ENCODE measurements at regions of chr7 and their contacts with region 1.

Region 1: GRCh38 chr7:14691597-14692203 is 210.9 kb downstream of the DGKB start:
- DNase-seq: no peak
- ATAC-seq: no peak
- H3K4me3 ChIP-seq: no peak overlapping the region
- H3K27ac ChIP-seq: no peak overlapping the region
- H3K4me1 ChIP-seq: no peaks in the 10 kb centered on the region
- H3K27me3 ChIP-seq: no peaks in the 10 kb centered on the region
- CTCF ChIP-seq: peak; percentile 87; the same call in 1 of the 2 replicates

Region 2: DNA sequence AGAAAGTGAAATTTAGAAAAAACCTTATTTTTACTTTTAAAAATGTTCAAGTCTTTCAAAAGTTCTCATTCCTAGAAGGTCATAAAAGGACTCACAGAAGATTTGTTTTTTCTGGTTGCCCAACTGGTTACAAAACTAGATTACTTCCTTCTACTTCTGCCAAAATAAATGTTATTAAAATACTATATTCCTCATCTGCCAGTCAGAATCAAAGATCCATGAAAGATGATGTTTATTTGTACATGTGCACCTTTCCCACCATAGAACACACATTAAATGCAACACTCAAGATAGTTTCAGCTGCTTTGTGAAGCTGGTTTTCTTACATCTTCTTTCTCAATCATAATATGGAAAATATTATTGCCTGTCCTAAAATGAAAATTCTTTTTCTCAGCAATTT is 1167.6 kb before region 1 on chr7:
- CTCF ChIA-PET with region 1: no interaction called
- POLR2A ChIA-PET with region 1: no interaction called
- in situ Hi-C with region 1: no loop called
- intact Hi-C with region 1: loop called (anchors 10 kb)
- DNase-seq: no peak
- ATAC-seq: no peak
- H3K4me3 ChIP-seq: no peak overlapping the region
- H3K27ac ChIP-seq: no peak overlapping the region
- H3K4me1 ChIP-seq: no peaks in the 10 kb centered on the region
- H3K27me3 ChIP-seq: no peaks in the 10 kb centered on the region
- CTCF ChIP-seq: no peak

Region 3: DNA sequence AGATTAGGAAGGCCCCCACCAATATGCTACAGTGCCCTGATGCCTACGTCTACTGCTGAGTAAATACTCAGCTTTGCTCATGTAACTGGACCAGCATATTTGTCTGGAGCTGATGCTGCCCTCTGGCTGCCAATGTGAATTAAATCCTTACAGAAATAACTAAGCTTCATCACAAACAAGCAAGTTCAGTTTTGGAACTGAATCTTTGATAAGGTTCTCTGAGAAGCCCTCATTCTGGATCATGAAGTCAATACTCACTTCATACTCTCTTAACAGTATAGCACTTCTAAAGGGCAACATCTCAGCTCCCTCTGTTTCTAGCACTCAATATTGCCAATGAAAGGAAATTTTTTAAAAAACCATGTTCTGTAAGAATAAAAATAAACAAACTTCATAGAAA is 948.9 kb before region 1 on chr7:
- CTCF ChIA-PET with region 1: no interaction called
- POLR2A ChIA-PET with region 1: no interaction called
- in situ Hi-C with region 1: no loop called
- intact Hi-C with region 1: loop called (anchors 10 kb)
- DNase-seq: peak; percentile 36
- ATAC-seq: peak; percentile 80
- H3K4me3 ChIP-seq: no peak overlapping the region
- H3K27ac ChIP-seq: peak overlapping the region; percentile 52; the same call in 1 of the 2 replicates
- H3K4me1 ChIP-seq: no peaks in the 10 kb centered on the region
- H3K27me3 ChIP-seq: no peaks in the 10 kb centered on the region
- CTCF ChIP-seq: peak; percentile 81

Region 4: GRCh38 chr7:14457568-14458453 is 233.9 kb before region 1 on chr7:
- CTCF ChIA-PET with region 1: no interaction called
- POLR2A ChIA-PET with region 1: no interaction called
- in situ Hi-C with region 1: no loop called
- intact Hi-C with region 1: loop called (anchors 5 kb)
- DNase-seq: peak; percentile 79
- ATAC-seq: peak; percentile 78
- H3K4me3 ChIP-seq: no peak overlapping the region; a peak in 1 of 4 replicates
- H3K27ac ChIP-seq: no peak overlapping the region
- H3K4me1 ChIP-seq: no peaks in the 10 kb centered on the region
- H3K27me3 ChIP-seq: no peaks in the 10 kb centered on the region
- CTCF ChIP-seq: peak; percentile 93

Region 5: DNA sequence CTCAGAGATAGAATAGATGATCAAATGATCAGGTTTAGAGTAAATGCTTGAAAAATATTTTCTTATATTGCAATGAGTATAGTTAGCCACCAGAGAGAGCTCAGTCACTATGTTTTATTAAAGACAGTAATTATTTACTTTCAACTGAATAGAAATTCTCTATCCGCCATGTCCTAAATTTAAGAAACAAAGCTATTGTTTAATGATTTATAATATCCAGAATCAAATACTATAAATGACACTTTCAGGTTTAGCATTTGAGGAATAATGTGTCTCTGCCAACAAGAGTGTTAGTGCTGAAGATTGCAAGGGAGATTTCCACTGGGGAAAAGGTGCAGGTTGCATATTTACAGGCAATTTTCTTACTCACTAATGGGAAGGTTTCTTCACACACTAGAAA is 26.1 kb after region 1 on chr7:
- CTCF ChIA-PET with region 1: no interaction called
- POLR2A ChIA-PET with region 1: no interaction called
- in situ Hi-C with region 1: no loop called
- intact Hi-C with region 1: no loop called
- DNase-seq: no peak
- ATAC-seq: no peak; the same call in 1 of the 2 replicates
- H3K4me3 ChIP-seq: no peak overlapping the region
- H3K27ac ChIP-seq: no peak overlapping the region
- H3K4me1 ChIP-seq: no peaks in the 10 kb centered on the region
- H3K27me3 ChIP-seq: no peaks in the 10 kb centered on the region
- CTCF ChIP-seq: peak; percentile 60; the same call in 1 of the 2 replicates